ENCODE measurements at regions of chr12 and their contacts with region 1.

Region 1: DNA sequence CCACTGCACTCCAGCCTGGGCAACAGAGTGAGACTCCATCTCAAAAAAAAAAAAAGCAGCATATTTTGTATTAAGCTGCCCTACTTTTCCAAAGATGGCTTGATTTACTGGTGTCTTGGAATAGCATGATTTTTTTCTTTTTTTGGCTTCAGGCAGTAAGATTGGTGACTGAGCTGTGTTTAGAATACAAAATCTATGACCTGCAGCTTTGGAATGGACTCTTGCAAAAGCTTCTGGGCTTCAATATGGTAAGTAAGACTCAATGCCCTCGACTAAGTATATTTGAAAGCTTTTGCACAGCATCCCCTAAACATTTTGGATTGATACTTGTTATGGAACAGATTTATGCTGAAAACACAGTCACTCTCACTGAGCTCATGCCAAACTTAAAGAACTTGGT is 87.8 kb downstream of the KNTC1 start:
- DNase-seq: no peak
- H3K4me3 ChIP-seq: no peak overlapping the region
- H3K27ac ChIP-seq: no peak overlapping the region
- H3K4me1 ChIP-seq: no peaks in the 10 kb centered on the region
- H3K27me3 ChIP-seq: no peaks in the 10 kb centered on the region
- CTCF ChIP-seq: no peak

Region 2: GRCh38 chr12:122571821-122572220 is 43.0 kb before region 1 on chr12:
- CTCF ChIA-PET with region 1: no interaction called
- dilution Hi-C with region 1: loop called (anchors 5 kb)
- in situ Hi-C with region 1: no loop called
- intact Hi-C with region 1: no loop called
- DNase-seq: no peak
- H3K4me3 ChIP-seq: no peak overlapping the region
- H3K27ac ChIP-seq: no peak overlapping the region
- H3K4me1 ChIP-seq: no peaks in the 10 kb centered on the region
- H3K27me3 ChIP-seq: no peaks in the 10 kb centered on the region
- CTCF ChIP-seq: no peak

Region 3: GRCh38 chr12:122661246-122661645 is 46.4 kb after region 1 on chr12:
- CTCF ChIA-PET with region 1: no interaction called
- dilution Hi-C with region 1: loop called (anchors 5 kb)
- in situ Hi-C with region 1: no loop called
- intact Hi-C with region 1: no loop called
- DNase-seq: no peak
- H3K4me3 ChIP-seq: no peak overlapping the region
- H3K27ac ChIP-seq: no peak overlapping the region
- H3K4me1 ChIP-seq: no peaks in the 10 kb centered on the region
- H3K27me3 ChIP-seq: no peaks in the 10 kb centered on the region
- CTCF ChIP-seq: no peak